ENCODE measurements at regions of chr19 and their contacts with region 1.

Region 1: GRCh38 chr19:50393589-50393988 is 9.4 kb downstream of the POLD1 start:
- DNase-seq: no peak
- ATAC-seq: no peak
- H3K4me3 ChIP-seq: no peak overlapping the region
- H3K4me3 Mint-ChIP-seq: no peak overlapping the region
- H3K27ac ChIP-seq: no peak overlapping the region
- H3K27ac Mint-ChIP-seq: no peak overlapping the region
- H3K4me1 ChIP-seq: no peaks in the 10 kb centered on the region
- H3K4me1 Mint-ChIP-seq: no peaks in the 10 kb centered on the region
- H3K27me3 ChIP-seq: no peaks in the 10 kb centered on the region
- H3K27me3 Mint-ChIP-seq: no peaks in the 10 kb centered on the region
- CTCF ChIP-seq: no peak

Region 2: GRCh38 chr19:50368649-50369570 is 24.7 kb before region 1 on chr19:
- CTCF ChIA-PET with region 1: no interaction called
- POLR2A ChIA-PET with region 1: no interaction called
- intact Hi-C with region 1: no loop called
- DNase-seq: peak; percentile 53 to 89 (median 73)
- ATAC-seq: peak; percentile 83
- H3K4me3 ChIP-seq: peak overlapping the region; percentile 72
- H3K4me3 Mint-ChIP-seq: peak overlapping the region; percentile 88
- H3K27ac ChIP-seq: peak overlapping the region in 1 of 2 donors; percentile 8
- H3K27ac Mint-ChIP-seq: peak overlapping the region; percentile 33
- H3K4me1 ChIP-seq: peaks cover 38% of the 10 kb centered on the region
- H3K4me1 Mint-ChIP-seq: peaks cover 39% of the 10 kb centered on the region
- H3K27me3 ChIP-seq: no peaks in the 10 kb centered on the region
- H3K27me3 Mint-ChIP-seq: no peaks in the 10 kb centered on the region
- CTCF ChIP-seq: peak; percentile 84

Region 3: GRCh38 chr19:50414864-50415660 is 21.5 kb after region 1 on chr19:
- CTCF ChIA-PET with region 1: no interaction called
- POLR2A ChIA-PET with region 1: no interaction called
- intact Hi-C with region 1: loop called in 1 of 2 experiments (anchors 2 kb)
- DNase-seq: peak; percentile 57 to 84 (median 69)
- ATAC-seq: peak; percentile 94
- H3K4me3 ChIP-seq: no peak overlapping the region
- H3K4me3 Mint-ChIP-seq: no peak overlapping the region
- H3K27ac ChIP-seq: no peak overlapping the region
- H3K27ac Mint-ChIP-seq: no peak overlapping the region
- H3K4me1 ChIP-seq: peaks cover 10% of the 10 kb centered on the region
- H3K4me1 Mint-ChIP-seq: peaks cover 2% of the 10 kb centered on the region
- H3K27me3 ChIP-seq: peaks cover 17 to 19% of the 10 kb centered on the region in 2 experiments
- H3K27me3 Mint-ChIP-seq: peaks cover 16% of the 10 kb centered on the region
- CTCF ChIP-seq: peak; percentile 62

Region 4: DNA sequence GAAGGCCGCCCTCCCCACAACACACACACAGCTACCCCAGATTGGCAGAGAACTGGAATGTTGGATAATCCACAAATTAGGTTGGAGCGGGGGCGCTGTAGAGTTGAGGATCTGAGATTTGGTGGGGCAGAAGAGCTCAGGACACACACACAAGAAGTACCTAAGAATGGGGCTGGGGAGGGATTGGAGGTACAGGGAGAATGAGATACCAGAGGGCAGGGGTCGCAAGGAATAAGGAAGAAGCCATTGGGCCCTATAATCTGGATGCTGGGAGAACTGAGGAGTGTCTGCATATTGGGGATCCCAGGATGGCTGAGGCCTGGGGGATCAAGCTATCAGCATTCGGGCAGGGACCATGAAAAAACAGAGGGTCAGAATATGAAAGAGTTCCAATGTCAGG is 234.6 kb after region 1 on chr19:
- CTCF ChIA-PET with region 1: no interaction called
- POLR2A ChIA-PET with region 1: no interaction called
- intact Hi-C with region 1: no loop called
- DNase-seq: no peak
- ATAC-seq: no peak
- H3K4me3 ChIP-seq: no peak overlapping the region
- H3K4me3 Mint-ChIP-seq: no peak overlapping the region
- H3K27ac ChIP-seq: no peak overlapping the region
- H3K27ac Mint-ChIP-seq: no peak overlapping the region
- H3K4me1 ChIP-seq: no peaks in the 10 kb centered on the region
- H3K4me1 Mint-ChIP-seq: no peaks in the 10 kb centered on the region
- H3K27me3 ChIP-seq: no peaks in the 10 kb centered on the region
- H3K27me3 Mint-ChIP-seq: peaks cover 34% of the 10 kb centered on the region
- CTCF ChIP-seq: no peak

Measured in CD4-positive, alpha-beta T cell (primary cell).